ENCODE measurements at regions of chr1 and their contacts with region 1.

Region 1: DNA sequence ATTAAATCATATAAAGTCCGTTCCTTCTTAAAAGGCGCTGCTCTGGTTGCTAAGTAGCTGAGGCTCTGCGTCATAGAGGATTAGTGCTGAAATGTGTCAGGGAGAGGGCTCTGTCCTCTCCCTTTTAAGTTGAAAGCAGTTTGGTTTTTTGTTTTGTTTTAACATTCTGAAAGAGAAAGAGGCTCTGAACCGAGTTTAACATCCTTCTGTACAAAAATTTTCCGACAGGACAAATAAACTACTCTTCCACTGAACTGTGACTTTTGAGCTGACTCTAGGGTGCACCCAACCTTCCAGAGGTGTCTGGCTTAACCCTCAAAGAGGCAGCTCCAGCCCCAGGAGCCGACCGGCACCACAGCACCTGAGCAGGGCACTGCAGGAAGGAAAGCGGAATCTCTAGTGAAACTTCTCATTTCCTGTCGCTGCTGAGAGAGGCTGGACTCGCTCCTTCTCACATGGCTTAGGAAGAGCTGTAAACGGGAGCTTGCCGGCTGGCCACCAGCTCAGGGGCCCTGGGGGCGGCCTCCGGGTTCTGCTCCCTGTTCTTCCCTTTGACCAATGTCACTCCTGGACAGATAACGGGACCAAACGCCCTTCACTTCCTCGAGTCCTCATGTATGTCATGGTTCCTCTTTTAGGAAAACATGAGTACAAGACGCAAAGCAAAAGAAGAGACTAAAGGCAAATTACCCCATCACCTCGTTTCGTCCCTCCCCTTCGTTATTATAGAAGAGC is 1.2 kb downstream of the VAV3 start:
- DNase-seq: peak; percentile 70
- H3K4me3 ChIP-seq: peak overlapping the region; percentile 73
- H3K27ac ChIP-seq: peak overlapping the region; percentile 25
- H3K4me1 ChIP-seq: peaks cover 11% of the 10 kb centered on the region
- CTCF ChIP-seq: no peak

Region 2: DNA sequence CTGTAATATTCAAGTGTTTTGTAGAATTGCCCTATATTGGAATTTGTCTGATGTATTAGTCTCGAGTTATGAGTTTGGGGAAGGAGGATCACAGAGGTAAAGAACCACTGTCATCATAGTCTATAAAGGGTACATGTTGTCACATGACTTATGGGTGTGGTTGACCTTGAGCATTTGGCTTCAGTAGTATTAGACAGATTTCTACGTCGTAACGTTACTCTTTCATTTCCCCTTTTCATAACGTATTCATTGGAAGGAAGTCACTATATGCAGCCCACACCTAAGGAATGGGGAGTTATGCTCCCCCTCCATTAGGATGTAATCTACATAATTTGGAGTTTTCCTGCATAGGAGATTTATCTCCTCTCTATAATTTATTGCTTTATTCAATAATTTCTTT is 111.3 kb after region 1 on chr1:
- CTCF ChIA-PET with region 1: no interaction called
- POLR2A ChIA-PET with region 1: no interaction called
- intact Hi-C with region 1: loop called (anchors 1 kb)
- DNase-seq: peak; percentile 68
- H3K4me3 ChIP-seq: peak overlapping the region; percentile 17
- H3K27ac ChIP-seq: peak overlapping the region; percentile 49
- H3K4me1 ChIP-seq: peaks cover 45% of the 10 kb centered on the region
- CTCF ChIP-seq: no peak

Region 3: GRCh38 chr1:108097018-108097417 is 133.2 kb after region 1 on chr1:
- CTCF ChIA-PET with region 1: no interaction called
- POLR2A ChIA-PET with region 1: no interaction called
- intact Hi-C with region 1: no loop called
- DNase-seq: no peak
- H3K4me3 ChIP-seq: no peak overlapping the region
- H3K27ac ChIP-seq: no peak overlapping the region
- H3K4me1 ChIP-seq: no peaks in the 10 kb centered on the region
- CTCF ChIP-seq: no peak

Region 4: DNA sequence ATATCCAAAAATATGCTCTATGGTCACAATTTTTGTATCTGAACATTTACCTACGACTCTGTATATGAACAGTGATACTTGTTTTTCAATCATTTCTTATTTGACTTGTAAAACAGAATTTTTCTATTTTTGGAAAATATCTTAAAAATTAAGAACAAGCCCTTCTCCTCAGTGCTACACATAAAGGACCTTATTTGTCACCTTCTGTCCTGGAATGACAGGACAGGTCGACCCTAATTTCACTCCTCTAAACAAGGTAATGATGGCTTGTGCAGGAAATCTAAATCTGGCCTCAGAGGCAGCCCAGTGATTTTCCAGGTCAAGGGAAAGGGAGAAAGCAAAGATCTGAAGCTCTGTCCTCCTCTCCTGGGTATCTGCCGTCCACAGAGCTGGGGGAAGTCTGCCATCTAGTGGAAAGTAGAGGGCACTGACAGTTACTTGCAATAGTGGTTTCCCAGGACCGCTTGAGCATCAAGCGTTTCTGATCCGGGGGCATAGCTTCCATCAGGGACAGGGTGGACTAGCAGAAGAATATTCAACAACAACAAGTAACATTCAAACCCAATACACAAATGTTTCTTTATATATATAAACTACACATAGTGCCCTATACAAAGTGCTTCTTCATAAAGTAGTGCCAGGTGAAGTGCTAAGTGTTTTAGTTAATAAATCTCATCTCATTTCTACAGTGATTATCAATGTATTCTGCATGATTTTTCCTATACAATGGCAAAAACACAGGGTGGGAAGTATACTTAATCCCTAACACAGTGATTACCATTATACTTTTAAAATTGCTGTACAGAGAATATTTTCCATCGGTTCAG is 161.8 kb after region 1 on chr1:
- CTCF ChIA-PET with region 1: interaction called, 3 read pairs
- POLR2A ChIA-PET with region 1: interaction called, 4 read pairs
- intact Hi-C with region 1: loop called (anchors 1 kb)
- DNase-seq: peak; percentile 77
- H3K4me3 ChIP-seq: no peak overlapping the region
- H3K27ac ChIP-seq: no peak overlapping the region
- H3K4me1 ChIP-seq: peaks cover 6% of the 10 kb centered on the region
- CTCF ChIP-seq: peak; percentile 91

Measured in OCI-LY7 (cell line).